Right cardiac atrium (tissue), 5 donors: ENCODE measurements at regions of chr4 and their contacts with region 1.

Region 1: GRCh38 chr4:7192252-7193029 is at the start of gene SORCS2:
- DNase-seq: peak; percentile 69 to 90 (median 88)
- ATAC-seq: peak; percentile 79 to 88
- H3K4me3 ChIP-seq: peak within 1 kb of the TSS; percentile 87
- H3K27ac ChIP-seq: no peak within 1 kb of the TSS
- H3K4me1 ChIP-seq: peaks cover 4% of the 10 kb centered on the region
- H3K27me3 ChIP-seq: no peaks in the 10 kb centered on the region
- total RNA-seq, gene SORCS2: 2.7 to 7.3 (median 2.8) TPM

Region 2: DNA sequence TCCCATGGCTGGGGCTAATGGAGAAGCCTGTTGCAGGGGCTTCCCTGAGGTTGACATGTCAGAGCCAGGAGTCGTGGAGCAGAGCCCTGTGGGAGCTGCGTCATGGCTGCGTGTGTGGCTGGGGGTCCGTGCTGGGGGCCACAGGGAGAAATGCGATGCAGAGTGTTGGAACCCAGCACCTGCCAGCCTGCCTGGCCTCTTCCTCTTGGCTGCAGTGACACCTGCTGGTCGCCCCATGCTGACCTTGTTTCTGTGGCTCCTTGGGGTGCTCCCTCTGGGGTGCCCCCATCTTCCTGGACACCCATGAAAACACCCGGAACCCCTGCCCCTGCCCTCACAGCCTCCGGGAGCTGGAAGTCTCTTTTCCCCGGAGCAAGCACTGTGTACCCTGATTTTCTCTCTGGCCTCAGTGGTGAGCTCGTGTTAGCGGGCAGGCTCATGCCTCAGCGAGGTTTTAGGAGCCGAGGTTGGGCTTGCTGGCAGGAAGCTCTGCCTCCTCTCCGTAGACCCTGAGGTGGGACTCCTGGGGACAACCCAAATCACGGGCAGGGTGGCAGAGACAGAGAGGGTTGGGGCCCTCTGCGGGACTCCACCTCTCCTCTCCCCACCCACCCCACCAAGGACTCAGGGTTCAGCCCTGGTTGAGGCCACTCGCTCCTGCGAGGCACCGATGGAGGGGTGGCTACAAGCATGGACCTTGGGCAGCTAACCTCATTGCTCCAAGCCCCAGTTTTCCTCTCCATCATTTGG is 103.6 kb after region 1 on chr4:
- intact Hi-C with region 1: loop called (anchors 2 to 5 kb)
- DNase-seq: peak; percentile 44 to 75 (median 73)
- ATAC-seq: peak; percentile 36 to 54
- H3K4me3 ChIP-seq: no peak overlapping the region
- H3K27ac ChIP-seq: no peak overlapping the region
- H3K4me1 ChIP-seq: peaks cover 4% of the 10 kb centered on the region
- H3K27me3 ChIP-seq: no peaks in the 10 kb centered on the region

Region 3: DNA sequence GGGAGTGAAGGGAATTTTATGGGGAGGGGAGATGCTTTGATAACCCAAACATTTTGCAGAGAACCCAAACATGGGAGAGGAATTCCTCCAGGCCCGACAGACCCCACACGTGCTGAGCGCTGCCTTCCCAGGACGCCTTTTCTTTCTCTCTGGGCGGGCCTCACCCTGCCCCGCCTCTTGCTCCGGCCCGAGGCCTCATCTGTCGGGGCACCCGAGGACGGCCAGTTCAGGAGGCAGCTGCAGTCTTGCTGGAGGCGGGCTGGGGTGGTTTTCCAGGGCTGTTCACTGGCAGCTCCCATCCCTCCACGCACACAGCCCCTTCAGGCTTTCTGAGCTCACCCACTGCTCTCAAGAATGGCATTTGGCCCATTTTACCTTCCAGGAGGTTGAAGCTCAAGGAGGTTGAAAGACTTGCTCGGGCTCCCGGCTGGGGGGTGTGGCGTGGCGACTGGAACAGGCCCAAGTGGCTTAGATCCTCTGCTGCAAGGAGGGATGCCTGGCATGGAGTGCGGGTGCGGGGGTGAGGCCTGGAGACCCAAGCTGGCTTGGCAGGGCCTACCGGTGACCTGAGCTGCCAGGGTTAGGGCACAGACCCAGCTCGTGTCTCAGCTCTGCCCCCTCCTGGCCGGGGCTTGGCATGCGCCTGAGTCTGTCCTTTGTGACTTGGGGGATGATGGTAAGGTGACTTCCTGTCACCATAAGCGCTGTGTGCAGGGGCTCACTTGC is 143.1 kb after region 1 on chr4:
- intact Hi-C with region 1: loop called in 1 of 4 experiments (anchors 5 kb)
- DNase-seq: peak; percentile 39 to 82 (median 82)
- ATAC-seq: peak; percentile 46 to 51
- H3K4me3 ChIP-seq: no peak overlapping the region
- H3K27ac ChIP-seq: no peak overlapping the region
- H3K4me1 ChIP-seq: no peaks in the 10 kb centered on the region
- H3K27me3 ChIP-seq: no peaks in the 10 kb centered on the region

Region 4: DNA sequence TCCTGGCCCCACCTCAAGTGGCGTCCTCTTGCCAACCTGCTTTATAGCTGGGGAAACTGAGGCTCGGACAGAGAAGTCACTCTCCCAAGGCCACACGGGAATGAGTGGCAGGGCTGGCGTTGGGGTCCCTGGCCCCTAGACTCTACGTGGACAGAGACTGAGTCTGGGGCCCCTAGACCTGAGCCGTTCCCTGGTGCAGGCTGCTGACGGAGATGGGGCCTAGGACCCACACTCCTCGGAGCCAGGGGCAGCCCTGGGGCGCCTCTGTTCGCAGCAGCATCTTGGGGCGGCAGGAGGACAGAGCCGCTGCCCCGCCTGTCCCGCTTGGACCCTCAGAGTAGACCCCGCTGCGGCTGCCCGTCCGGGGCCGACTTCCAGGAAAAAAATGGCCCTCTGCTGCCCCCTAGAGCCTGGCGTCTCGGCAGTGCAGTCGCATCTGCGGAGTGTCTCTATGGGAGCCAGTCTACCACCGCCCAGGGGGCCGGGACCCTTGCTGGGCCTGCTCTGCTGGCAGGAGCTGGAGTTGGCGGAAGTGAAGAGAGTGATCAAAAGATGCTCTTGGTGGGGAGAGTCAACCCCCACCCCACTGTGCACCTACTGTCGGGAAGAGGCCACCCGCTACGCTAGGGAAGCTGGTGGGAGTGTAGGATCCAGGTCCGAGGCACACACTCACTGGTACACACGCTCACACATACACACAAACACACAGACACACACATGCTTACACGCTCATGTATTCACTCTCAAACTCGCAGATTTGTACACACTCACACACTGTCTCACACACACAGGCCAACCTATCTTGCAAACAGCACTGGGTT is 527.1 kb after region 1 on chr4:
- intact Hi-C with region 1: loop called (anchors 2 to 10 kb)
- DNase-seq: peak; percentile 62 to 84 (median 82)
- ATAC-seq: peak; percentile 60 to 67
- H3K4me3 ChIP-seq: no peak overlapping the region
- H3K27ac ChIP-seq: no peak overlapping the region
- H3K4me1 ChIP-seq: no peaks in the 10 kb centered on the region
- H3K27me3 ChIP-seq: no peaks in the 10 kb centered on the region